GM12878 (cell line): ENCODE measurements at regions of chr17 and their contacts with region 1.

Region 1: GRCh38 chr17:49230636-49231562 is at the start of gene PHOSPHO1:
- DNase-seq: no peak
- ATAC-seq: peak; percentile 94
- H3K4me3 ChIP-seq: peak within 1 kb of the TSS; percentile 49
- H3K27ac ChIP-seq: no peak within 1 kb of the TSS
- H3K4me1 ChIP-seq: no peaks in the 10 kb centered on the region; the same call in 1 of the 2 replicates
- H3K27me3 ChIP-seq: no peaks in the 10 kb centered on the region
- CTCF ChIP-seq: no peak
- EP300 ChIP-seq: no peak
- POLR2A ChIP-seq: peak; percentile 74
- RAD21 ChIP-seq: no peak
- polyA plus RNA-seq, gene PHOSPHO1: 0.04 TPM in 1 of 2 experiments, not detected in the other

Region 2: DNA sequence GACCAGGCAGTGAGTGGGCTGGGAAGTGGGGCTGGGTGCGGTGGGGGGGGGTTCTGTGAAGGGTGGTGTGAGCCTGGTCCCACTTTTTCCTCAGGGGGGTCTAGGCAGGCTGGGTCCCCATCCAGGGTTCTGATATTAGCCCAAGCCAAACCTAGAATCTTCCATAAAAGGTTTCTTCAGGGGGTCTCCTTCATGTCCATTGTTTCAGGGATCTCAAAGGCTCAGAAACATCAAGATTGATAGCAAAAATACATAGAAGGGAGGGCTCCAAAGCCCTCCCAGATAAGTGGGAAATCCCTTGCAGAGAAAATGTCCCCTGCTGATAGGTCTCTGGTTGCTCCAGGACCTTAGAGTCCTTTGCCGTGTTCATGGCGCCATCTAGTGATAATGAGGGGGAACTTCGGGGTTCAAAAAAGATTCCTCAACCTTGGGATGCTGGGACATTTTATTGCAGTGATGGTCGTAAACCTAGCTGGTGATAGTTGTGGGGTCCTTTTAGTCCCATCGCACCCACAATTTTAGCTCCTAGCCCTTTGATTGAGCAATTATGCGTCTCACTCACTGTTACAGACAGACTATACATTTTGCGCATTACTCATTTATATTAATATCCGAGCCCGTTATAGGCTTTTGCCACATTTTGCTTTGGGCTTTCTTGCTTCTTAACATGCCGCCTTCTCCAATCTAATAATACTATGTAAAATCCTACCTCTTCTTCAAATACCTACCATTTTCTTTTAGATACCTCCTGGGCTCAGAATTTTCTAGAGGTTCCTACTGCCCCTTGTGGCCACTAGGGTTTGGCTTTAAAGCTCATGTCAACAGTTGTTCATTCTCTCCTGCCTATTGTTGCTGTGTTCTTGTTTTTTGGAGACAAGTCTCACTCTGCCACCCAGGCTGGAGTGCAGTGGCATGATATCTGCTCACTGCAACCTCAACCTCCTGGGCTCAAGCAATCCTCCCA is 198.7 kb before region 1 on chr17:
- CTCF ChIA-PET with region 1: interaction called, 5 read pairs
- POLR2A ChIA-PET with region 1: no interaction called
- RAD21 ChIA-PET with region 1: no interaction called
- SMC1A ChIA-PET with region 1: no interaction called
- in situ Hi-C with region 1: no loop called
- intact Hi-C with region 1: loop called (anchors 5 kb)
- DNase-seq: peak; percentile 16
- ATAC-seq: peak; percentile 92
- H3K4me3 ChIP-seq: no peak overlapping the region
- H3K27ac ChIP-seq: no peak overlapping the region
- H3K4me1 ChIP-seq: no peaks in the 10 kb centered on the region
- H3K27me3 ChIP-seq: no peaks in the 10 kb centered on the region
- CTCF ChIP-seq: peak; percentile 69 to 96 (median 86)
- EP300 ChIP-seq: no peak
- POLR2A ChIP-seq: no peak
- RAD21 ChIP-seq: peak; percentile 97

Region 3: DNA sequence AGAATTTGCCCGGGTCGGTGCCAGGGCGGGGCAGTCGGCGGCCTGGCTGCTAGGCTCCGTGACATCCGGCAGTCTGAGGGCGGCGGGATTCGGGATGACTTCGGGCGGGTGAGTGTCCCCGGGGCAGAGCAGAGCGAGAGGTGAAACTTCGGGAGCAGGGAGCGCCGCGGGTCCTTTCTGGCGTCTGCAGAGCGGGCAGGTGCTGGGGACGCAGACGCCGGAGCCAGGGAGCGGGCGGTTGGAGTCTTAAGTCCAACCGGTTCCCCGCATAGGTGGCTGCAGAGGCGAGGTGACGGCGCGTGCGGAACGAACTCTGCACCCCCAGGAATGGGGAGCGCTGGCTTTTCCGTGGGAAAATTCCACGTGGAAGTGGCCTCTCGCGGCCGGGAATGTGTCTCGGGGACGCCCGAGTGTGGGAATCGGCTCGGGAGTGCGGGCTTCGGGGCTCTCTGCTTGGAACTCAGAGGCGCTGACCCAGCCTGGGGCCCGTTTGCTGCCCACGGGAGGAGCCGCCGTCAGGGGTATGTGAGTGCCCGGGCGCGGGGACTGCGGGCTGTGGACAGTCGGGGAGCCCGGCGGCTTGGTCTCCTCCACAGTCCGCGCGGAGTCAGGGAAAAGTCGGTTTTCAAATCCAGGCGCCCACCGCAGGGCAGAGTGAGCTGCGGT is 98.1 kb before region 1 on chr17 and contains the start of gene B4GALNT2:
- CTCF ChIA-PET with region 1: no interaction called
- POLR2A ChIA-PET with region 1: no interaction called
- RAD21 ChIA-PET with region 1: no interaction called
- SMC1A ChIA-PET with region 1: no interaction called
- in situ Hi-C with region 1: no loop called
- intact Hi-C with region 1: no loop called
- DNase-seq: no peak
- ATAC-seq: no peak
- H3K4me3 ChIP-seq: no peak within 1 kb of the TSS
- H3K27ac ChIP-seq: no peak within 1 kb of the TSS
- H3K4me1 ChIP-seq: no peaks in the 10 kb centered on the region
- H3K27me3 ChIP-seq: peaks cover 0 to 3% of the 10 kb centered on the region in 2 experiments; a peak in 3 of 4 replicates
- CTCF ChIP-seq: no peak
- EP300 ChIP-seq: no peak
- POLR2A ChIP-seq: no peak
- RAD21 ChIP-seq: no peak
- polyA plus RNA-seq, gene B4GALNT2: not detected

Region 4: DNA sequence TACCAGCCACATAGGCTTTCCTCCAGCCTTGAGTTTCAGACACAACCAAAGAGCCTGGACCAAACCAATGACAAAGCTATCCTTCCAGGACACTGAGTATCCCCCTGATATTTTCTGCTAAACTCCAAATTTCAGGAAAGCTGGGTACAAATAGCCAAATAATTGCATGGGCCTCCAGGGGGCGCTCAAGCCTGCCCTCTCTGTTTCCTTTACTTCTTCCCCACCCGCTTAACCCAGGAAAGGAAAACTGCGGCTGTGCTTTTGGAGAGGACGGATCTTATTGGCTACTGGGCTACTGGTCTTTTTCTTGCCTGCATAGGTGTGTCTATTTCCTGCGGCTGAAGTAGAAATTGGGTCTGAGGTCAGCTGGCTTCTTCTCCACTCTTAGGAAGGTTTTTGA is 50.6 kb before region 1 on chr17:
- CTCF ChIA-PET with region 1: interaction called, 178 read pairs
- POLR2A ChIA-PET with region 1: interaction called, 4 read pairs
- RAD21 ChIA-PET with region 1: interaction called, 72 read pairs
- SMC1A ChIA-PET with region 1: interaction called, 118 read pairs
- in situ Hi-C with region 1: loop called (anchors 10 kb)
- intact Hi-C with region 1: loop called (anchors 1 kb)
- DNase-seq: peak; percentile 28
- ATAC-seq: peak; percentile 78
- H3K4me3 ChIP-seq: no peak overlapping the region
- H3K27ac ChIP-seq: no peak overlapping the region
- H3K4me1 ChIP-seq: no peaks in the 10 kb centered on the region
- H3K27me3 ChIP-seq: no peaks in the 10 kb centered on the region
- CTCF ChIP-seq: peak; percentile 81 to 88 (median 88)
- EP300 ChIP-seq: no peak
- POLR2A ChIP-seq: no peak
- RAD21 ChIP-seq: peak; percentile 91

Region 5: GRCh38 chr17:49197346-49197998 is 33.4 kb before region 1 on chr17:
- CTCF ChIA-PET with region 1: interaction called, 89 read pairs
- POLR2A ChIA-PET with region 1: interaction called, 10 read pairs
- RAD21 ChIA-PET with region 1: interaction called, 35 read pairs
- SMC1A ChIA-PET with region 1: interaction called, 20 read pairs
- in situ Hi-C with region 1: no loop called
- intact Hi-C with region 1: no loop called
- DNase-seq: no peak
- ATAC-seq: no peak
- H3K4me3 ChIP-seq: no peak overlapping the region
- H3K27ac ChIP-seq: no peak overlapping the region
- H3K4me1 ChIP-seq: peaks cover 28% of the 10 kb centered on the region
- H3K27me3 ChIP-seq: no peaks in the 10 kb centered on the region
- CTCF ChIP-seq: no peak
- EP300 ChIP-seq: no peak
- POLR2A ChIP-seq: no peak
- RAD21 ChIP-seq: no peak

Region 6: GRCh38 chr17:49217651-49218413 is 13.1 kb before region 1 on chr17:
- CTCF ChIA-PET with region 1: interaction called, 61 read pairs
- POLR2A ChIA-PET with region 1: interaction called, 12 read pairs
- RAD21 ChIA-PET with region 1: interaction called, 51 read pairs
- SMC1A ChIA-PET with region 1: interaction called, 22 read pairs
- in situ Hi-C with region 1: no loop called
- intact Hi-C with region 1: no loop called
- DNase-seq: peak; percentile 93
- ATAC-seq: peak; percentile 68
- H3K4me3 ChIP-seq: no peak overlapping the region; the same call in 1 of the 2 replicates
- H3K27ac ChIP-seq: peak overlapping the region; percentile 77
- H3K4me1 ChIP-seq: peaks cover 64% of the 10 kb centered on the region
- H3K27me3 ChIP-seq: no peaks in the 10 kb centered on the region
- CTCF ChIP-seq: no peak
- EP300 ChIP-seq: peak; percentile 32 to 84; a peak in 2 of 4 replicates
- POLR2A ChIP-seq: peak; percentile 68
- RAD21 ChIP-seq: peak; percentile 23; the same call in 1 of the 2 replicates

Region 7: GRCh38 chr17:49266233-49266632 is 35.3 kb after region 1 on chr17:
- CTCF ChIA-PET with region 1: no interaction called
- POLR2A ChIA-PET with region 1: no interaction called
- RAD21 ChIA-PET with region 1: no interaction called
- SMC1A ChIA-PET with region 1: no interaction called
- in situ Hi-C with region 1: no loop called
- intact Hi-C with region 1: no loop called
- DNase-seq: no peak
- ATAC-seq: no peak
- H3K4me3 ChIP-seq: no peak overlapping the region
- H3K27ac ChIP-seq: no peak overlapping the region
- H3K4me1 ChIP-seq: no peaks in the 10 kb centered on the region
- H3K27me3 ChIP-seq: no peaks in the 10 kb centered on the region; a peak in 2 of 4 replicates
- CTCF ChIP-seq: no peak
- EP300 ChIP-seq: no peak
- POLR2A ChIP-seq: no peak
- RAD21 ChIP-seq: no peak

Region 8: DNA sequence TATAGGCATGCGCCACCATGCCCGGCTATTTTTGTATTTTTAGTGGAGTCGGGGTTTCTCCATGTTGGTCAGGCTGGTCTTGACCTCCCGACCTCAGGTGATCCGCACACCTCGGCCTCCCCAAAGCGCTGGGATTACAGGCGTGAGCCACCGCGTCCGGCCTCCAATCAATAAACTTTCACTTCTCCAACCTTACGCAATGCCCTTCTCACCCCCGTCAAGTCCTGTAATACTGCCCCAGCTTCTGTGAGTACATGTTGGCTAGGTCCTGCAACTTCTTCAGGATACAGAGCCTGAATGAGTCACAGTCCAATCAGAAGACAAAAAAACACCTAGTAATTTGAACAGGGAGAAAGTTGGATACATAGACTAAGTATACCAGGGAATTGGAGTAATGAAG is 46.7 kb after region 1 on chr17:
- CTCF ChIA-PET with region 1: no interaction called
- POLR2A ChIA-PET with region 1: no interaction called
- RAD21 ChIA-PET with region 1: no interaction called
- SMC1A ChIA-PET with region 1: no interaction called
- in situ Hi-C with region 1: no loop called
- intact Hi-C with region 1: no loop called
- DNase-seq: no peak
- ATAC-seq: no peak
- H3K4me3 ChIP-seq: no peak overlapping the region
- H3K27ac ChIP-seq: no peak overlapping the region
- H3K4me1 ChIP-seq: no peaks in the 10 kb centered on the region
- H3K27me3 ChIP-seq: no peaks in the 10 kb centered on the region
- CTCF ChIP-seq: no peak
- EP300 ChIP-seq: no peak
- POLR2A ChIP-seq: no peak
- RAD21 ChIP-seq: no peak

Region 9: GRCh38 chr17:49390548-49391324 is 159.8 kb after region 1 on chr17:
- CTCF ChIA-PET with region 1: interaction called, 3 read pairs
- POLR2A ChIA-PET with region 1: no interaction called
- RAD21 ChIA-PET with region 1: no interaction called
- SMC1A ChIA-PET with region 1: no interaction called
- in situ Hi-C with region 1: no loop called
- intact Hi-C with region 1: loop called (anchors 10 kb)
- DNase-seq: no peak
- ATAC-seq: peak; percentile 59
- H3K4me3 ChIP-seq: peak overlapping the region; percentile 42; the same call in 1 of the 2 replicates
- H3K27ac ChIP-seq: peak overlapping the region; percentile 64
- H3K4me1 ChIP-seq: peaks cover 39% of the 10 kb centered on the region
- H3K27me3 ChIP-seq: no peaks in the 10 kb centered on the region
- CTCF ChIP-seq: no peak
- EP300 ChIP-seq: no peak
- POLR2A ChIP-seq: no peak
- RAD21 ChIP-seq: no peak